ENCODE measurements at regions of chr6 and their contacts with region 1.

Region 1: GRCh38 chr6:36317629-36318028 is 19.1 kb downstream of the BNIP5 start:
- DNase-seq: no peak
- ATAC-seq: no peak
- H3K4me3 ChIP-seq: no peak overlapping the region
- H3K27ac ChIP-seq: no peak overlapping the region
- H3K4me1 ChIP-seq: no peaks in the 10 kb centered on the region
- H3K27me3 ChIP-seq: peaks cover 73% of the 10 kb centered on the region
- CTCF ChIP-seq: no peak
- POLR2A ChIP-seq: no peak
- RAD21 ChIP-seq: no peak

Region 2: GRCh38 chr6:36280467-36280866 is 37.2 kb before region 1 on chr6:
- CTCF ChIA-PET with region 1: no interaction called
- POLR2A ChIA-PET with region 1: no interaction called
- dilution Hi-C with region 1: no loop called
- in situ Hi-C with region 1: no loop called
- intact Hi-C with region 1: no loop called
- DNase-seq: no peak
- ATAC-seq: no peak
- H3K4me3 ChIP-seq: no peak overlapping the region
- H3K27ac ChIP-seq: no peak overlapping the region
- H3K4me1 ChIP-seq: no peaks in the 10 kb centered on the region
- H3K27me3 ChIP-seq: peaks cover 73% of the 10 kb centered on the region
- CTCF ChIP-seq: no peak
- POLR2A ChIP-seq: no peak
- RAD21 ChIP-seq: no peak

Region 3: DNA sequence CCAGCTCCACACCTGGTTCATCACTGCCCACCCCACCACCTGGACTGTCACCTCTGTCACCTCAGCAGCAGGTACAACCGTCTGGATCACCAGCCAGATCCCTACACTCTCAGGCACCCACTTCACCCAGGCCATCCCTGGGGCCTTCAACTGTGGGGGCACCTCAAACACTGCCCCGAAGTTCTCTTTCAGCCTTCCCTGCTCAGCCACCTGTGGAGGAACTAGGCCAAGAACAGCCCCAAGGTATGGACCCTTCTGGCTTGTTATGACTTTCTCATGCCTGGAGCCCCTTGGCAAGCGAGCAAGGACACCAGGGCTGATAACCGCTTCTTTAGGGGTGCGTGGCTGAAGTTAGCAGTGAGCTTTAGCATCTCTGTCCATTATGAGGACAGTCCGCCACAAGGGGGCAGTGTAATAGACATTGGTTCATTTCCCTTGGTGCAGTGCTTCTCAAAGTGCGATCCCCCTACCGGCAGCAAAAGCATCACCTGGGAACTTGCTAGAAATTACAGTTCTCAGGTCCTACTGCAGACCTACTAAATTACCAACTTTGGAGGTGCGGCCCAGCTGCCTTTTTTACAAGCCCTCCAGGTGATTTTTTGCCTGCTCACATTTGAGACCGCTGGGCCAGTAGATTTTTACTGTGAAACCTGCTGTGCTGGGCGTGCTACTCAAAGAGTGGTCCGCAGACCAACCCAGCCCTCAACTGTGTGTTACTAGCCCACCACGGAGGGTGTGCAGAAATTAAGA is 15.2 kb before region 1 on chr6:
- CTCF ChIA-PET with region 1: interaction called, 5 read pairs
- POLR2A ChIA-PET with region 1: interaction called, 12 read pairs
- dilution Hi-C with region 1: no loop called
- in situ Hi-C with region 1: no loop called
- intact Hi-C with region 1: no loop called
- DNase-seq: peak; percentile 86
- ATAC-seq: peak; percentile 85
- H3K4me3 ChIP-seq: no peak overlapping the region
- H3K27ac ChIP-seq: no peak overlapping the region
- H3K4me1 ChIP-seq: peaks cover 4% of the 10 kb centered on the region
- H3K27me3 ChIP-seq: peaks cover 15% of the 10 kb centered on the region
- CTCF ChIP-seq: peak; percentile 98
- POLR2A ChIP-seq: no peak
- RAD21 ChIP-seq: peak; percentile 74